A673 (cell line): ENCODE measurements at regions of chr22 and their contacts with region 1.

Region 1: DNA sequence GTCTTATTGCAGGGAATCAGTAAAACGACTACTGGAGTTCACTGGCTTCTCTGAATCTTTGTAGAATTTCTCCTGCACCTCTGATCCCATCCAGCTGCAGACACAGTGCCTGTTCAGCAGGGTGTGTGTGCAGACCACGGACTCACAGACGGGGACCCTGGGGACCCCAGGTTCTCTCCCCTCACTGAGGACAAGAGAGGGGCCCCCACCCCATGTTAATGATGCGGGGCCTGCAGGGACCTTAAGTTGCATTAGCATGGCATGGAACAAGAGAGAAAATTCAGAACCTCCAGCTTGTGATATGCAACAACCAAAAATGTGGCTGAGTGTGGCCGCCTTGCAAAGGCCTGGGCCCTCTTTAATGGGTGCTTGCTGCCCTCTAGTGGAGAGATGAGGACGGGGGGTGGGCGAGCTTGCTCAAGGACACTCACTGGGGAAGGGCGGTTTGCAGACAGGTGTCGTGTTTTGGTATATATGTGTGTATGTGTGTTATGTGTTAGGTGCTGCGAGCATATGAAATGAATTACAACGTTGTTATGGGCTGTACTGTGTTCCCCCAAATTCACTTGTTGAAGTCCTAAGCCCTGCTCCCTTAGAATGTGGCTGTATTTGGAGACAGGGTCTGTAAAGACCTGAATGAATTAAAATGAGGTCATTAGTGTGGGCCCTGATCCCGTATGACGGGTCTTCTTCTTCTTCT is 84.4 kb upstream of the SEPTIN5 start:
- DNase-seq: peak; percentile 86
- H3K4me3 ChIP-seq: no peak overlapping the region
- H3K27ac ChIP-seq: no peak overlapping the region
- H3K4me1 ChIP-seq: no peaks in the 10 kb centered on the region
- H3K27me3 ChIP-seq: no peaks in the 10 kb centered on the region
- CTCF ChIP-seq: peak; percentile 98

Region 2: DNA sequence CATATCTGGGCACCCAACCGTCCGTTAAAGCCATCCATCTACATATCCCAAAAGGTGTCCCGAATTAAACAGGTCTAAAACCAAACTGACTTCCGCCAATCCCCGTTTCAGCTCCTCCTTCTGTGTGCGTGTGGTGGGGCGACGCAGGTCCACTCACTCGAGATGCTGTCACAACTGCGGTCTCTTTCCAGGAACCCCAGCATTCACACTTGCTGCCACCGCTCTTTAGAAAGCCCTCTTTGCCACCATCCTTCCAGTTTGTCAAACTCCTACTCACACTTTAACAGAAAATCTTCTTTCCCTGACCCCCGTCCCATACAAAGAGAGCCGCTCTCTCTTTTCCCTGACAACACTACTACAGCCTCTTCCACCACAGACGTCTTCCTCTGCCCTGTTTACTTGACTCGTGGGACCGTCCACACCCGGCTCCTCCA is 485.9 kb before region 1 on chr22:
- CTCF ChIA-PET with region 1: interaction called, 10 read pairs
- POLR2A ChIA-PET with region 1: no interaction called
- intact Hi-C with region 1: loop called (anchors 1 kb)
- DNase-seq: no peak
- H3K4me3 ChIP-seq: peak overlapping the region; percentile 86
- H3K27ac ChIP-seq: peak overlapping the region; percentile 77
- H3K4me1 ChIP-seq: no peaks in the 10 kb centered on the region
- H3K27me3 ChIP-seq: peaks cover 30% of the 10 kb centered on the region
- CTCF ChIP-seq: no peak

Region 3: DNA sequence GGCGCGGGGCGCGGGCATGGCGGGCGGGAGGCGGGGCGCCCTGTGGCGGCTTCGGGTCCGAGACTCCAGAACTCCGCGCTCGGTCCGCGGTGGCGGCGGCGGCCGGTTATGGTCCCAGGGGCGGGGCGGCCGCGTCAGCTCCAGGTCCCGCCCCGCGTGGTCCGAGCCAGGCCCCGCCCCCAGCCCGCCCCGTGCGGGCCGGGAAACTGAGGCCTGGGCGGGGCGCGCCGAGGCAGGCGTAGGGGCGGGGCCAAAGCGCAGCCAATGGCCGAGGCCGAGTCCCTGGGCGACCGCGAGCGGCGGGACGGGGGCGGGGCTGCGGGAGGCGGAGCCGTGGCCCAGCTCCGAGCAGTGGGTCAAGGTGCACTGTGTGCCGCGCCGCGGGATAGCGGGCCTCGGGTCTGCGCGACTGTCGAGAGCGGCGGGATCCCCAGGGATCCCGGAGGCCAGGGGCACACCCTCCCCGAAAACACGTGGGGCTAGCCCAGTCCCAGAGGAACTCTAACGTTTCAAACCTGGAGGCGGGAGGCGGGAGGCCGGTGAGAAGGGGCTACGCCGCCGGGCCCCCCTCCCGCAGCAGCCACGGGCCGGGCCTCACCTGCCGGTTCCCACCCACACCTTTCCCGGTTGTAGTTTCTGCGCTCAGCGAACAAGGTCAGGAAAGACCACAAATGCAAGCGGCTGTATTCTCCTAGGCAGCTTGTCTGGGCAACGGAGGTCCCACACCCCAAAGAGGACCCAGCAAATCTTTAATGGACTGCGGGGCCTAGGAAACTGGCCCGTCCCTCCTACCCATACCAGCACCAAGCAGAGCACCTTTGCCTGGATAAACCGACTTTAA is 451.0 kb before region 1 on chr22 and contains the start of gene SLC25A1:
- CTCF ChIA-PET with region 1: interaction called, 12 read pairs
- POLR2A ChIA-PET with region 1: no interaction called
- intact Hi-C with region 1: loop called (anchors 2 kb)
- DNase-seq: peak; percentile 93
- H3K4me3 ChIP-seq: peak within 1 kb of the TSS; percentile 87
- H3K27ac ChIP-seq: peak within 1 kb of the TSS; percentile 81
- H3K4me1 ChIP-seq: peaks cover 32% of the 10 kb centered on the region
- H3K27me3 ChIP-seq: no peaks in the 10 kb centered on the region
- CTCF ChIP-seq: no peak
- total RNA-seq, gene SLC25A1: 91.0 and 115 TPM in 2 replicates

Region 4: GRCh38 chr22:19291580-19292457 is 338.1 kb before region 1 on chr22 and contains the start of gene CLTCL1:
- CTCF ChIA-PET with region 1: no interaction called
- POLR2A ChIA-PET with region 1: no interaction called
- intact Hi-C with region 1: loop called (anchors 5 kb)
- DNase-seq: peak; percentile 80
- H3K4me3 ChIP-seq: peak within 1 kb of the TSS; percentile 79
- H3K27ac ChIP-seq: peak within 1 kb of the TSS; percentile 64
- H3K4me1 ChIP-seq: peaks cover 8% of the 10 kb centered on the region
- H3K27me3 ChIP-seq: no peaks in the 10 kb centered on the region
- CTCF ChIP-seq: no peak
- total RNA-seq, gene CLTCL1: 7.5 and 11.5 TPM in 2 replicates

Region 5: GRCh38 chr22:19619144-19620009 is 10.5 kb before region 1 on chr22:
- CTCF ChIA-PET with region 1: no interaction called
- POLR2A ChIA-PET with region 1: no interaction called
- intact Hi-C with region 1: no loop called
- DNase-seq: no peak
- H3K4me3 ChIP-seq: no peak overlapping the region
- H3K27ac ChIP-seq: no peak overlapping the region
- H3K4me1 ChIP-seq: no peaks in the 10 kb centered on the region
- H3K27me3 ChIP-seq: no peaks in the 10 kb centered on the region
- CTCF ChIP-seq: no peak

Region 6: DNA sequence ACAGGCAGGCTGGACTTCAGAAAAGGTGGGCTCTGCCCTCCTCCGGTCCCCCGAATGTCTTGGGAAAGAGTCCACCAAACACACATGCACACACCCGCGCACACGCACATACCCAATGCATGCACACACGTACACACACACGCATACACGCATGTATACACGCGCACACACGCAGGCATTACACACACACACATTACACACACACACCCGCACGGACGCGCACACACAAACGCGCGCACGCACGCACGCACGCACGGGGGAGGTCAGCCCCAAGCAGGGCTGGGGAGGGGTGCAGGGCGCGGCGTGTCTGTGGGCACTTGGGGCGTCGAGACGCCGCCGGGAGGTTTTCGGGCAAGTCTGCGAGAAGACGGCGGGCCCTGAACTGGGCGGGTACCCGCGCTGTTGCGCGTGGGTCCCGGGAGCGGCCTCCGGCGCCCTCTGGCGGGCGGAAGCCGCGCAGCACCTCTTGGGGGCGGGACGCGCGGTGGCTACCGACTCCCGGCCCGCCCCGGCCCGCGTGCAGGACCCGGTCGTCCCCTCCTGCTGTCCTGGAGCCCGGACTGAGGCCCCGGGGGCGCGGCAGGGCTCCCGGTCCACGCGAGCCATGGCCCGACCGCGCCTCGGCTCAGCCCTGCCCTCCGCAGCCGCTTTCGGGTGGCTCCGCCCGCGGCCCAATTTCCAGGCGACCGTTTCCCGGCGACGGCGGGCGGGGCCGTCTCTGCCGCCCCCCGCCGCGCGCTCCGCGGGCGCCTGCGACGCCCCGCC is 88.0 kb after region 1 on chr22:
- CTCF ChIA-PET with region 1: no interaction called
- POLR2A ChIA-PET with region 1: no interaction called
- intact Hi-C with region 1: loop called (anchors 1 kb)
- DNase-seq: peak; percentile 80
- H3K4me3 ChIP-seq: peak overlapping the region; percentile 81
- H3K27ac ChIP-seq: peak overlapping the region; percentile 87
- H3K4me1 ChIP-seq: peaks cover 10% of the 10 kb centered on the region
- H3K27me3 ChIP-seq: no peaks in the 10 kb centered on the region
- CTCF ChIP-seq: peak; percentile 62

Region 7: GRCh38 chr22:19909350-19910179 is 279.7 kb after region 1 on chr22:
- CTCF ChIA-PET with region 1: no interaction called
- POLR2A ChIA-PET with region 1: no interaction called
- intact Hi-C with region 1: loop called (anchors 5 kb)
- DNase-seq: peak; percentile 86
- H3K4me3 ChIP-seq: no peak overlapping the region
- H3K27ac ChIP-seq: no peak overlapping the region
- H3K4me1 ChIP-seq: no peaks in the 10 kb centered on the region
- H3K27me3 ChIP-seq: no peaks in the 10 kb centered on the region
- CTCF ChIP-seq: peak; percentile 98